Common myeloid progenitor, CD34-positive (primary cell): ENCODE measurements at regions of chr2 and their contacts with region 1.

Region 1: GRCh38 chr2:104872866-104873688 is 19.2 kb downstream of the POU3F3 start:
- DNase-seq: peak; percentile 76 to 82 (median 82)
- H3K4me3 ChIP-seq: peak overlapping the region; percentile 51 to 79 (median 68)
- H3K27ac ChIP-seq: no peak overlapping the region
- H3K4me1 ChIP-seq: peaks cover 4 to 29% (median 21%) of the 10 kb centered on the region in 4 experiments
- H3K27me3 ChIP-seq: peaks cover 9 to 53% (median 37%) of the 10 kb centered on the region in 5 experiments

Region 2: DNA sequence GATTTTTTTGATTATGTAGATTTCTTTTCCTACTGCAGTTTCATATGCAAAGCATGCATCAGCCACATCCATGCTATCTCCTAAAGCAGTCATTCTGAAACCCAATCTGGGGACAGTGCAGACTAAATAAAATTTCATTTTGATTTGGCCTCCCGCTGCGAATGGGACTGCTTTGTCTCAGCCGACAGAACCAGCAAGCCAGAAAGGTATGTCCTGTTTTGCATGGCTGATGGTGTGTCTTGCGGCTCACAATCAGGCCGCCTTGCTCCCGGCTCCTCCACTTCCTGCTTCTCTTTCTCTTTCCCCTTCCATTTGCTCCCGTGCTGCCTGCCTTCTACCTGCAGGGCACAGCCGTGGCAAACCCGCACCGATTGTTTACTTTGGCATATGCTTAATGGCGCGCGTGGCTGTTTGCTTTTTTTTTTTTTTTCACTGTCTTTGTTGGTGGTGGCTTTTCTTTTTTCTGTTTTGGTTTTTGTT is 438.7 kb before region 1 on chr2:
- CTCF ChIA-PET with region 1: no interaction called
- POLR2A ChIA-PET with region 1: no interaction called
- DNase-seq: peak in 1 of 3 donors; percentile 3
- H3K4me3 ChIP-seq: peak overlapping the region in 5 of 7 experiments; percentile 10 to 59 (median 49)
- H3K27ac ChIP-seq: no peak overlapping the region
- H3K4me1 ChIP-seq: peaks cover 0 to 7% (median 4%) of the 10 kb centered on the region in 4 experiments
- H3K27me3 ChIP-seq: peaks cover 0 to 12% (median 2%) of the 10 kb centered on the region in 5 experiments

Region 3: GRCh38 chr2:104862058-104862941 is 10.8 kb before region 1 on chr2:
- CTCF ChIA-PET with region 1: interaction called, 11 read pairs
- POLR2A ChIA-PET with region 1: no interaction called
- DNase-seq: peak in 2 of 3 donors; percentile 62 to 65
- H3K4me3 ChIP-seq: peak overlapping the region in 2 of 7 experiments; percentile 33 to 54
- H3K27ac ChIP-seq: no peak overlapping the region
- H3K4me1 ChIP-seq: peaks cover 0 to 20% (median 10%) of the 10 kb centered on the region in 4 experiments
- H3K27me3 ChIP-seq: peaks cover 55 to 98% (median 73%) of the 10 kb centered on the region in 5 experiments